ENCODE measurements at regions of chr1 and their contacts with region 1.

Region 1: GRCh38 chr1:183821889-183822611 is 17.1 kb downstream of the RGL1 start:
- DNase-seq: peak in 1 of 2 donors; percentile 55
- ATAC-seq: peak; percentile 47 to 76 (median 65)
- H3K4me3 ChIP-seq: no peak overlapping the region
- H3K27ac ChIP-seq: peak overlapping the region in 9 of 10 donors; percentile 13 to 73 (median 56)
- H3K4me1 ChIP-seq: peaks cover 12 to 79% (median 49%) of the 10 kb centered on the region in 9 donors
- H3K27me3 ChIP-seq: no peaks in the 10 kb centered on the region
- CTCF ChIP-seq: no peak

Region 2: GRCh38 chr1:183711741-183712361 is 110.2 kb before region 1 on chr1:
- intact Hi-C with region 1: no loop called
- DNase-seq: peak in 1 of 2 donors; percentile 58
- ATAC-seq: peak; percentile 77 to 89 (median 84)
- H3K4me3 ChIP-seq: no peak overlapping the region
- H3K27ac ChIP-seq: peak overlapping the region in 8 of 10 donors; percentile 31 to 64 (median 57)
- H3K4me1 ChIP-seq: peaks cover 0 to 47% (median 23%) of the 10 kb centered on the region in 9 donors
- H3K27me3 ChIP-seq: no peaks in the 10 kb centered on the region
- CTCF ChIP-seq: peak in 1 of 9 donors; percentile 16

Region 3: DNA sequence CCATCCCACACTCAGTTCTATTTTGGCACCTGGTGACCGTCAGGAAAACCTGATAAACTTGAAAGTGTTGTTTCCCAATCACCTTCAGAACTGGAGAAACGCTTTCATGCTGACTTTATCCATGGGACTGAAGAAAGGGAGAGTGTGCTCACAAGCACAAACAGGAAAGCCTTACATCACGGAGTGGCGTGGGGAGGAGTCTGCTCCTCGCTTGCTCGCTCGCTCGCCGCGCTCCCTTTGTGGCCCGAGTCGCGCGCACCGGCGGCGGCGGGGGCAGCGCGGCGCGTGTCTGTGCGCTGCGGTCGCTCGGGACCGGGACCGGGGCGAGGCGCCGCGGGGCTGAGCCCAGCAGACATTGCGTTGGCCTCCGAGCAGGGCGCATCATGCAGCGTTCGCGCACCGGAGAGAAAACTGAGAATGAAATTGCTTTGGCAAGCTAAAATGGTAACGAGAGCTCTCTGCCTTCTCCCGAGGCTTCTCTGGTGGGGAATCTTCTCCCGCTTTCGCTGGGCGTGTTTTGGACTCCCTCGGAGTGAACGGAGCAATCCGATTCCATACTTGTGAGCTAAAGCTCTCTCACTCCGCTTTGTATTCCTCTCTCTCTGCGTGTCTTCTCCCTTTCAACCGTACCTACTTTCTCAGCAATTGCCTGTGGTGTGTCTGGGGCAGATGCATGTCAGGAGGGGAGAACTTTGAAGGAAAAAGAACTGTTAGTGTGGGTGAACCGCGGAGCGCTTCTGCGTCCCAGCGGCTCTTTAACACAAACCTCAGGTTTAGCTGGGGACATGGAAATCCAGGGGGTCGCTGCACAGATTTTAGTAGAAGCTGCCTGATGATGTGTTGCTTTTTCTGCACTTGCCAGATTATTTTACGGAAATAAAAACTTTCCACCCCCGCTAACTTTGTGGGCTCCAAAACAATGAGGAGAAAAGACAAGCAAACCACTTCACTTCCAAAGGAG is 16.9 kb before region 1 on chr1 and contains the start of gene RGL1:
- intact Hi-C with region 1: loop called in 1 of 10 experiments (anchors 1 kb)
- DNase-seq: peak; percentile 70 to 76
- ATAC-seq: peak; percentile 86 to 96 (median 91)
- H3K4me3 ChIP-seq: peak within 1 kb of the TSS; percentile 55 to 73 (median 66)
- H3K27ac ChIP-seq: peak within 1 kb of the TSS; percentile 70 to 89 (median 80)
- H3K4me1 ChIP-seq: peaks cover 0 to 50% (median 30%) of the 10 kb centered on the region in 9 donors
- H3K27me3 ChIP-seq: no peaks in the 10 kb centered on the region
- CTCF ChIP-seq: no peak
- total RNA-seq, gene RGL1: 12.6 to 33.4 (median 18.9) TPM

Region 4: GRCh38 chr1:183850852-183851251 is 28.8 kb after region 1 on chr1:
- intact Hi-C with region 1: loop called in 1 of 10 experiments (anchors 5 kb)
- DNase-seq: no peak
- ATAC-seq: no peak
- H3K4me3 ChIP-seq: no peak overlapping the region
- H3K27ac ChIP-seq: no peak overlapping the region
- H3K4me1 ChIP-seq: peaks cover 0 to 41% (median 26%) of the 10 kb centered on the region in 9 donors
- H3K27me3 ChIP-seq: no peaks in the 10 kb centered on the region
- CTCF ChIP-seq: no peak

Region 5: DNA sequence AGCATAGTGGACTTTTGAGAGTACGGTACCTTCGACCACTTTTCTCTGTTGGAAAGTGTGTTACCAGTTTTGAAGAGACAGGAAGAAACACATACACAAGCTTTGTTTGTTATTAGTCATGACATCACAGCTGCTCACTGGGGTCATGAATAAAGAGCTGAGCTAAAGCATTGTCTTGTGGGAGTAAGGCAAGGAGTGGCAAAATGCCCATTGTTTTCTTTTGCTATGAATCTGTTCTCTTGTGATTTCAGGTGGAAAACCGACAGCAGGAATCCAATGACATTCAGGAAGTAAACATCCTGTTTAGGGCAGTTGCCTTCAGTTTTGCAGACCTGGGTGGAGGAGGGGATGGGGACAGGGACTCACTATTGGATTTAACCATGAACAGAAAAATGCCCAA is 49.1 kb after region 1 on chr1:
- intact Hi-C with region 1: loop called in 1 of 10 experiments (anchors 5 kb)
- DNase-seq: peak in 1 of 2 donors; percentile 38
- ATAC-seq: peak in 6 of 8 donors; percentile 40 to 69 (median 54)
- H3K4me3 ChIP-seq: no peak overlapping the region
- H3K27ac ChIP-seq: peak overlapping the region; percentile 24 to 88 (median 72)
- H3K4me1 ChIP-seq: peaks cover 11 to 83% (median 68%) of the 10 kb centered on the region in 9 donors
- H3K27me3 ChIP-seq: no peaks in the 10 kb centered on the region
- CTCF ChIP-seq: no peak

Measured in heart right ventricle (tissue), 16 donors.